ENCODE measurements at regions of chr13 and their contacts with region 1.

Region 1: DNA sequence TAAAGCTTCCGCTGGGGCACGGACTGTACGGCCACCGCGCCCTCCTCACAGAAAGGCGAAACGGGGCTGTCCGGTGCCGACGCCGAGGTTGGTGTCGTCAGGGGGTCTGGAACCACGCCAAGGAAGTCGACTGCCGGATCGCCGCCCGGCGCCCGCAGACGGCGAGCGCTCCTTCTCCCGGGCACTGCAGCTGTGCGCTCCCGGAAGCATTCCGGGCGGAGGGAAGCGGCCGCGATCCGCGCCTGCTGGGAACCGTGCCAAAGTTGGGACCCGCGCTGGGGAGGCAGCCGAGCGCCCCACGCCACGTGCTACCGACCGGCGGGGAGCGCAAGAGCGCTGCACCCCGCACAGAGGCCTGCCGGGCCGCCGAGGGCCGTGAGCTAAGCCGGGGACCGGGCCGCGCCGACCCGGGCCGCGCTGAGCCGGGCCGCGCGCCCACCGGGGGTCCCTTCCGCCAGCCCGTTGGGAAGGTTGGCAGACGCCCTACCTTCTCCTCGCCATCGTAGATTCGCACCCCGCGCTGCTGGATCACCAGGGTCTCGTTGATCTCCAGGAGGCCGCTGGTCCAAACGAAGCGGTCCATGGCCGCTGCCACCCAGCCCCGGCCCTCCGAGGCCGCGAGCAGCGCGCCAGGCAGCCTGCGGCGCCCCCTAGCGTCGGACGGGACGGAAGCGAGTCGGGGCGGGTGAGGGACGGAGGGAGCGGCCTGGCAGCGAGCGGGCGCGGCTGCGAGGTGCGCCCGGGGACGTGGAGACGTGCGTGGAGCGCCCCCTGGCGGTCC is at the start of gene VPS36:
- DNase-seq: peak; percentile 85 to 99 (median 95)
- ATAC-seq: peak; percentile 85
- H3K4me3 ChIP-seq: peak within 1 kb of the TSS; percentile 92
- H3K4me3 Mint-ChIP-seq: peak within 1 kb of the TSS; percentile 80 to 98 (median 94)
- H3K27ac ChIP-seq: peak within 1 kb of the TSS; percentile 88
- H3K27ac Mint-ChIP-seq: peak within 1 kb of the TSS; percentile 58 to 96 (median 90)
- H3K4me1 ChIP-seq: peaks cover 26 to 27% of the 10 kb centered on the region in 2 donors
- H3K4me1 Mint-ChIP-seq: peaks cover 17 to 52% (median 45%) of the 10 kb centered on the region in 7 donors
- H3K27me3 ChIP-seq: no peaks in the 10 kb centered on the region
- H3K27me3 Mint-ChIP-seq: peaks cover 0 to 3% (median 0%) of the 10 kb centered on the region in 5 donors
- total RNA-seq, gene VPS36: 40.4 to 53.7 (median 49.5) TPM

Region 2: DNA sequence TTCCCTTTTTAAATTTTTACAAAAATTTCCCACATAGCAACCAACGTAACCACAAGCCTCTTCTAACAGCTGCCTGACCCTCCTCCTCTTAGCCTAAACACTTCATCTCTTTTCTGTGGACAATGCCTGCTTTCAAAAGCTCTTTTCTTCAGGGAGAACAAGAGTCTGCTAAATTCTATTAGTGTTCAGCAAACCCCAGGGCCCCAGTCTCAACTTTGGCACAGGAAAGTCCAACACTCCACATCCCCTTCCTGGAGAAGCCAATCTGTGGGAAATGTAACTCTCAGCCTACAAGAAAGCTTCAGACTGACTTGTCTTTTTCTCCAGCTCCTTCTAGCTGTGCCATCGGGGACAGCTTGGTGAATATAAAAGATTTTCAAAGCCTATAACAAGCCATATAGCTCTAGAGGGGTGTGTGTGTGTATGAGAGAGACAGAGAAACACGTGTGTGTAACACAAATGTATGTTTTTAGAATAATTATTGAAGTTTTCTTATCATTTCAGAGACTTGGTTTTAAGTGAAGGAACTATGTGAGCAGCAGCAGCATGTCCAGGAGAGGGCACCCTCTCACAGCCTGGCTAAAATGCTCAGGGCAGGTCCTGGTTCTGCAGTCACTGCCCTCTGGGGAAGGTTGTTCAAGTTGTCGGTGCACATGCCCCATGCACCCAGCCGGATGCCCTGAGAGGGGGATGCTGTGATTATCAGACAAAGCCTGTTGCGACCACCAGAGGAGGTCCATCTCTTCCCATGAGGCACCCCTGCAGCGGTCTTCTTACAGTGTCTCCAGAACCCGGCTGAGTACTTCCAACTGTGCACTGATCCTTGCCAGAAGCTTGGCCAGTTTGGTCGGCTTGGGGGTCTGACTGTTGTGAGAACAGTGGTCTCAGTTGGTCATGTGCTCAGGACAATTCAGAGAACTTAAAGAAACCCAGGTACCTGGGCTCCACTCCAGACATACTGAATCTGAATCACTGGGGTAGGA is 554.0 kb before region 1 on chr13:
- CTCF ChIA-PET with region 1: no interaction called
- POLR2A ChIA-PET with region 1: no interaction called
- intact Hi-C with region 1: loop called in 1 of 2 experiments (anchors 1 kb)
- DNase-seq: peak in 8 of 9 donors; percentile 16 to 55 (median 40)
- ATAC-seq: peak; percentile 73
- H3K4me3 ChIP-seq: no peak overlapping the region
- H3K4me3 Mint-ChIP-seq: no peak overlapping the region
- H3K27ac ChIP-seq: no peak overlapping the region
- H3K27ac Mint-ChIP-seq: peak overlapping the region in 2 of 9 donors; percentile 22 to 42
- H3K4me1 ChIP-seq: no peaks in the 10 kb centered on the region
- H3K4me1 Mint-ChIP-seq: peaks cover 0 to 8% (median 0%) of the 10 kb centered on the region in 7 donors
- H3K27me3 ChIP-seq: no peaks in the 10 kb centered on the region
- H3K27me3 Mint-ChIP-seq: peaks cover 7 to 26% (median 11%) of the 10 kb centered on the region in 5 donors

Region 3: DNA sequence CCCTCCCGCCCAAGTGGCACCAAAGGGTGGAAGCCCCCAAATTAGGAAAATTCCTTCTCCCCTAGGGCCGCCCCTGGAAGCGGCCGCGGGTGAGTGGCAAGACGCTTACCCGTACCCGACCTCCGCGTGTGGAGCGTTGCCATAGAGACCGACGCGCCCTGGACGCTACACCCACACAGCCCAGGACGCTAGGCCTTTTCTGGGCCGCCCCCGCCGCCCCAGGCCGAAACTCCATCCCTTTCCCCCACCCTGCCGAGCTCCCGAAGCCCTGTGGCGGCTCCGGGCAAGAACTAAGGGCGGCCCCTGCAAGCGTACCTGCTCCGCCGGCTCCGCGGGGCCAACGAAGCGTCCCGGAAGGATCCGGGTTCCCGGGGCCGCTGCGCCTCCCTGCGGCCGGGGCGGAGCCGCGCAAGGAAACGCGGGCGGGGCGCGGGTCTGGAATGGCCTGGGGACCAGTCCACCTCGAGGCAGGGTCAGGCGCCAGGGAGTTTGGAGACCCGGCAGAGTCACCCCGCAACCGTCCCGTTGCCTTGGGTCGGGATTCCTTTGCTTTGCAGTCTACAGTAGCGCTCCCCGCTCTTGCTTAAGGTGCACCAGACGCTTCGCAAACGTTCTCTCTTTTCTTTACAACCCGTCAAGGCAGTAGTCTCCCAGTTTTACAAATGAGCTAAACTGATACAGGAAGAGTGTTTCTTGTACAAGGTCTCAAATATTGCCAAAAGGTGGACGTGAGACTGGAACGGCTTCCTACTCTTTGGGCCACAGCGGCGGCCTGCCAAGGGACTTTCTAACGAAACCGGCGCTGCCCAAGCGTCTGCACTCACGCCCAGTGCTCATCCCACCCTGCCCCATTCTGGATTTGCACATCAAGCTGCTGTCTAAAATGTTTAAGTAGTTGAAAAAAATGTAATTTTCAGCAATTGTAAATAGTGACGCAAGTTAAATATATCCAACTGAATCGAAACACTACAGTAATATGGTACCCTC is 321.2 kb before region 1 on chr13 and contains the start of gene NEK5:
- CTCF ChIA-PET with region 1: no interaction called
- POLR2A ChIA-PET with region 1: no interaction called
- intact Hi-C with region 1: loop called in 1 of 2 experiments (anchors 2 kb)
- DNase-seq: peak; percentile 36 to 75 (median 55)
- ATAC-seq: peak; percentile 82
- H3K4me3 ChIP-seq: peak within 1 kb of the TSS; percentile 51
- H3K4me3 Mint-ChIP-seq: peak within 1 kb of the TSS; percentile 85 to 94 (median 88)
- H3K27ac ChIP-seq: no peak within 1 kb of the TSS
- H3K27ac Mint-ChIP-seq: peak within 1 kb of the TSS in 4 of 9 donors; percentile 3 to 19 (median 6)
- H3K4me1 ChIP-seq: peaks cover 11 to 13% of the 10 kb centered on the region in 2 donors
- H3K4me1 Mint-ChIP-seq: peaks cover 11 to 21% (median 18%) of the 10 kb centered on the region in 7 donors
- H3K27me3 ChIP-seq: no peaks in the 10 kb centered on the region
- H3K27me3 Mint-ChIP-seq: peaks cover 0 to 14% (median 6%) of the 10 kb centered on the region in 5 donors
- total RNA-seq, gene NEK5: not detected

Region 4: GRCh38 chr13:52194184-52194868 is 255.9 kb before region 1 on chr13:
- CTCF ChIA-PET with region 1: interaction called, 4 read pairs
- POLR2A ChIA-PET with region 1: interaction called, 4 read pairs
- intact Hi-C with region 1: loop called (anchors 1 kb)
- DNase-seq: peak; percentile 77 to 92 (median 84)
- ATAC-seq: peak; percentile 94
- H3K4me3 ChIP-seq: peak overlapping the region; percentile 67
- H3K4me3 Mint-ChIP-seq: peak overlapping the region; percentile 88 to 99 (median 98)
- H3K27ac ChIP-seq: peak overlapping the region; percentile 78
- H3K27ac Mint-ChIP-seq: peak overlapping the region; percentile 90 to 98 (median 95)
- H3K4me1 ChIP-seq: no peaks in the 10 kb centered on the region
- H3K4me1 Mint-ChIP-seq: peaks cover 15 to 42% (median 37%) of the 10 kb centered on the region in 7 donors
- H3K27me3 ChIP-seq: no peaks in the 10 kb centered on the region
- H3K27me3 Mint-ChIP-seq: peaks cover 0 to 3% (median 0%) of the 10 kb centered on the region in 5 donors

Region 5: GRCh38 chr13:52399708-52400107 is 50.5 kb before region 1 on chr13:
- CTCF ChIA-PET with region 1: no interaction called
- POLR2A ChIA-PET with region 1: no interaction called
- intact Hi-C with region 1: loop called in 1 of 2 experiments (anchors 1 kb)
- DNase-seq: no peak
- ATAC-seq: peak; percentile 52
- H3K4me3 ChIP-seq: no peak overlapping the region
- H3K4me3 Mint-ChIP-seq: no peak overlapping the region
- H3K27ac ChIP-seq: no peak overlapping the region
- H3K27ac Mint-ChIP-seq: no peak overlapping the region
- H3K4me1 ChIP-seq: peaks cover 0 to 8% of the 10 kb centered on the region in 2 donors
- H3K4me1 Mint-ChIP-seq: peaks cover 4 to 13% (median 8%) of the 10 kb centered on the region in 7 donors
- H3K27me3 ChIP-seq: no peaks in the 10 kb centered on the region
- H3K27me3 Mint-ChIP-seq: peaks cover 26 to 39% (median 38%) of the 10 kb centered on the region in 5 donors

Region 6: GRCh38 chr13:52432456-52432855 is 17.7 kb before region 1 on chr13:
- CTCF ChIA-PET with region 1: interaction called, 5 read pairs
- POLR2A ChIA-PET with region 1: interaction called, 7 read pairs
- intact Hi-C with region 1: loop called in 1 of 2 experiments (anchors 1 kb)
- DNase-seq: no peak
- ATAC-seq: no peak
- H3K4me3 ChIP-seq: no peak overlapping the region
- H3K4me3 Mint-ChIP-seq: no peak overlapping the region
- H3K27ac ChIP-seq: no peak overlapping the region
- H3K27ac Mint-ChIP-seq: no peak overlapping the region
- H3K4me1 ChIP-seq: peaks cover 0 to 3% of the 10 kb centered on the region in 2 donors
- H3K4me1 Mint-ChIP-seq: peaks cover 0 to 5% (median 0%) of the 10 kb centered on the region in 7 donors
- H3K27me3 ChIP-seq: no peaks in the 10 kb centered on the region
- H3K27me3 Mint-ChIP-seq: no peaks in the 10 kb centered on the region

Region 7: GRCh38 chr13:52652196-52652979 is 202.2 kb after region 1 on chr13 and contains the start of gene SUGT1:
- CTCF ChIA-PET with region 1: interaction called, 4 read pairs
- POLR2A ChIA-PET with region 1: interaction called, 4 read pairs
- intact Hi-C with region 1: loop called (anchors 1 kb)
- DNase-seq: peak; percentile 90 to 97 (median 95)
- ATAC-seq: peak; percentile 96
- H3K4me3 ChIP-seq: peak within 1 kb of the TSS; percentile 87
- H3K4me3 Mint-ChIP-seq: no peak within 1 kb of the TSS
- H3K27ac ChIP-seq: peak within 1 kb of the TSS; percentile 94
- H3K27ac Mint-ChIP-seq: no peak within 1 kb of the TSS
- H3K4me1 ChIP-seq: peaks cover 17 to 22% of the 10 kb centered on the region in 2 donors
- H3K4me1 Mint-ChIP-seq: peaks cover 6 to 18% (median 13%) of the 10 kb centered on the region in 7 donors
- H3K27me3 ChIP-seq: no peaks in the 10 kb centered on the region
- H3K27me3 Mint-ChIP-seq: no peaks in the 10 kb centered on the region
- total RNA-seq, gene SUGT1: 21.3 to 49.0 (median 33.8) TPM

Region 8: GRCh38 chr13:53382008-53382407 is 931.8 kb after region 1 on chr13:
- CTCF ChIA-PET with region 1: no interaction called
- POLR2A ChIA-PET with region 1: no interaction called
- intact Hi-C with region 1: no loop called
- DNase-seq: no peak
- ATAC-seq: no peak
- H3K4me3 ChIP-seq: no peak overlapping the region
- H3K4me3 Mint-ChIP-seq: no peak overlapping the region
- H3K27ac ChIP-seq: no peak overlapping the region
- H3K27ac Mint-ChIP-seq: no peak overlapping the region
- H3K4me1 ChIP-seq: no peaks in the 10 kb centered on the region
- H3K4me1 Mint-ChIP-seq: no peaks in the 10 kb centered on the region
- H3K27me3 ChIP-seq: no peaks in the 10 kb centered on the region
- H3K27me3 Mint-ChIP-seq: peaks cover 0 to 8% (median 0%) of the 10 kb centered on the region in 5 donors

Measured in naive thymus-derived CD4-positive, alpha-beta T cell (primary cell).